Activated T-helper 2 cell treated with anti-CD3 and anti-CD28 coated beads, Interferon-gamma antibody, Interleukin-2, Interleukin-4, amounts not matched to agents 10 μg/mL and 5 μg/mL and 100 μg/mL, durations not matched to agents 14 hours and 24 hours and 36 hours (primary cell): ENCODE measurements at regions of chr9 and their contacts with region 1.

Region 1: DNA sequence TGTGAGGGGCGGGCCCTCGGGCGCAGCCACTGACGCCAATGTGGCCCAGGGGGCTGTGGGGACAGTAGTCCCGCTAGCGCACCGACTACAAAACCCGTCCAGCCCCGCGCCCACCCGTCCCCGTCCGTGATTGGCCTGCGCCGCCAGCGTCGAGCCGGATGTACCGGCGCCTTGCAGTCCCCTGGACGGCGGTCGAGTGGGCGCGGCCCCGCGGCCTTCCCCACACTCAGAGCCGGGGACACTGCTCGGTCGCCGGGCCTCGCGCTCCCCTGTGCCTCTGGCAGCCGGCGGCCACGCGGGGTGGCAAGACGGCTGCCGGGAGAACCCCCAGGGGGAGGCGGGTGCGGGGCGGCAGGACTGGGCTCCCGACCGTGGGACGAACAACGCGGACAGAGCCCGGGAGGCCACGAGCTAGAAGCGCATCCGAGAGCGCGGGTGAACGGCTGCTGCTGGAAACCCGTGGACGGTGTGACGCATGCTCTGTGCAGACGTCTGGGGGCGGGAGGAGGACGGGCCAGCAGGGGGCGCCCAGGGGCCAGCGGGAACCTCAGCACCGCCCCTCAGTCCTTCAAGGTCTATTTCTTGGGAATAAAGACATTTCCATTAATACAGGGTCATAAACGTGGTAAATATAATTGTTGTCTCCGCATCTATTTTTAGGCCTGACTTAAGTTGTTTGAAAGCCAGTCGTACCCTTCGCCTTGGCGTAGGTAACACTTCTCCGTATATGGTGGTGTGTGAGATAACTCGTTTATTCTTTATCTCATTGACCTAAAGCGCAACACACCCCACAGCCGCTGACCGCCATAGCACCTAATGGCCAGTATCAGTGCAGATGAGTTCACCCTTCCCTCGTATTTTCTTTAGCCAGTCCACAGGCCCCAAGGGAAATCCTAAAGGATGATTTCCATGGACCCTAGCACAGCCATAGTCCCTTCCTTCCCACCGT is 629 bp upstream of the BICD2 start:
- DNase-seq: peak; percentile 97
- H3K4me3 Mint-ChIP-seq: peak overlapping the region; percentile 83
- H3K27ac Mint-ChIP-seq: peak overlapping the region; percentile 87
- H3K4me1 Mint-ChIP-seq: peaks cover 28% of the 10 kb centered on the region
- H3K27me3 Mint-ChIP-seq: no peaks in the 10 kb centered on the region

Region 2: GRCh38 chr9:92115071-92115858 is 650.0 kb before region 1 on chr9 and contains the start of gene SPTLC1:
- intact Hi-C with region 1: loop called (anchors 2 kb)
- DNase-seq: peak; percentile 93
- H3K4me3 Mint-ChIP-seq: peak within 1 kb of the TSS; percentile 96
- H3K27ac Mint-ChIP-seq: peak within 1 kb of the TSS; percentile 96
- H3K4me1 Mint-ChIP-seq: peaks cover 26% of the 10 kb centered on the region
- H3K27me3 Mint-ChIP-seq: no peaks in the 10 kb centered on the region
- total RNA-seq, gene SPTLC1: 63.2 and 64.0 TPM in 2 replicates

Region 3: GRCh38 chr9:92775466-92775865 is 10.2 kb after region 1 on chr9:
- intact Hi-C with region 1: no loop called
- DNase-seq: no peak
- H3K4me3 Mint-ChIP-seq: no peak overlapping the region
- H3K27ac Mint-ChIP-seq: no peak overlapping the region
- H3K4me1 Mint-ChIP-seq: peaks cover 3% of the 10 kb centered on the region
- H3K27me3 Mint-ChIP-seq: peaks cover 2% of the 10 kb centered on the region

Region 4: GRCh38 chr9:92790542-92791527 is 25.6 kb after region 1 on chr9:
- intact Hi-C with region 1: loop called (anchors 1 kb)
- DNase-seq: peak; percentile 55
- H3K4me3 Mint-ChIP-seq: no peak overlapping the region
- H3K27ac Mint-ChIP-seq: peak overlapping the region; percentile 36
- H3K4me1 Mint-ChIP-seq: peaks cover 11% of the 10 kb centered on the region
- H3K27me3 Mint-ChIP-seq: peaks cover 14% of the 10 kb centered on the region

Region 5: DNA sequence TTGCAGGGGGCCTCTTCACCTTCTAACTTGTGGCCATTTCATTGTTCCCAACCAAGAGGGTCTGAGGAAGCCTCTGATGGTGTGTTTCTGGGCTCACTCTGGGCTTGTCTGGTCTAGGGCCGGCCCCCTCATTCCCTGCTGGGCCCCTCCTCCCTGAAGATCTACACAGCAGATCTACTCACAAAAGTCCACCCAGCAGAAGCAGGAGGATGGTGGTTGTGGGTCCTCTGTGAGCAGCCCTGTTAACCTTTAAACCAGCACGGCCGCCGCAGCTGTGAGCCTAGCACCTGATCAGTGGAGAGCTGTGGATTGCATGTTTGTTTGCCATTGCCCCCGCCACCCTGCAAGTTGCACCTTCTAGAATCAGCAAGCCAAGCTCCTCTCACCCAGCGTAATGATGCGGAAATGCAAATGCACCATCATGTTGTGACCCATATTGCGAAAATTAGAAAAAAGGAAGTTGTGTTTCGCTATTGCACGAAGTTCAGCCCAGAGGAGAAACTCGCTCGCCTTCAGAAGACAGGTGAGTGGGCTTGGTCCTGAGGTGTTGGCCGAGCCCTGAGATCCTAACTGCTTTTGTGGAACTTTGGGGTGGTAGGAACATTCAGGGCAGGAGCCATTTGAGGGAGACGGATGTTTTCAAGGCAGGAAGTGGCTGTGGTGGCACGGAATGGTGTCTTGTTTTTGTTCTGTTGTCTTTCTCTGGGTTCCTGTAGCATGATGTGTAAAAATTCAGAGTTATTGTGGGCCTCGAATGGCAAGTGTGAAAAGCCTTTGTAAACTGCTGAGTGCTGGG is 198.8 kb after region 1 on chr9:
- intact Hi-C with region 1: loop called (anchors 5 kb)
- DNase-seq: peak; percentile 71
- H3K4me3 Mint-ChIP-seq: peak overlapping the region; percentile 88
- H3K27ac Mint-ChIP-seq: peak overlapping the region; percentile 95
- H3K4me1 Mint-ChIP-seq: peaks cover 45% of the 10 kb centered on the region
- H3K27me3 Mint-ChIP-seq: no peaks in the 10 kb centered on the region

Region 6: GRCh38 chr9:94166237-94166963 is 1401.1 kb after region 1 on chr9:
- intact Hi-C with region 1: loop called (anchors 10 kb)
- DNase-seq: peak; percentile 91
- H3K4me3 Mint-ChIP-seq: peak overlapping the region; percentile 88
- H3K27ac Mint-ChIP-seq: peak overlapping the region; percentile 84
- H3K4me1 Mint-ChIP-seq: peaks cover 44% of the 10 kb centered on the region
- H3K27me3 Mint-ChIP-seq: no peaks in the 10 kb centered on the region